Panc1 (cell line): ENCODE measurements at regions of chr19 and their contacts with region 1.

Region 1: DNA sequence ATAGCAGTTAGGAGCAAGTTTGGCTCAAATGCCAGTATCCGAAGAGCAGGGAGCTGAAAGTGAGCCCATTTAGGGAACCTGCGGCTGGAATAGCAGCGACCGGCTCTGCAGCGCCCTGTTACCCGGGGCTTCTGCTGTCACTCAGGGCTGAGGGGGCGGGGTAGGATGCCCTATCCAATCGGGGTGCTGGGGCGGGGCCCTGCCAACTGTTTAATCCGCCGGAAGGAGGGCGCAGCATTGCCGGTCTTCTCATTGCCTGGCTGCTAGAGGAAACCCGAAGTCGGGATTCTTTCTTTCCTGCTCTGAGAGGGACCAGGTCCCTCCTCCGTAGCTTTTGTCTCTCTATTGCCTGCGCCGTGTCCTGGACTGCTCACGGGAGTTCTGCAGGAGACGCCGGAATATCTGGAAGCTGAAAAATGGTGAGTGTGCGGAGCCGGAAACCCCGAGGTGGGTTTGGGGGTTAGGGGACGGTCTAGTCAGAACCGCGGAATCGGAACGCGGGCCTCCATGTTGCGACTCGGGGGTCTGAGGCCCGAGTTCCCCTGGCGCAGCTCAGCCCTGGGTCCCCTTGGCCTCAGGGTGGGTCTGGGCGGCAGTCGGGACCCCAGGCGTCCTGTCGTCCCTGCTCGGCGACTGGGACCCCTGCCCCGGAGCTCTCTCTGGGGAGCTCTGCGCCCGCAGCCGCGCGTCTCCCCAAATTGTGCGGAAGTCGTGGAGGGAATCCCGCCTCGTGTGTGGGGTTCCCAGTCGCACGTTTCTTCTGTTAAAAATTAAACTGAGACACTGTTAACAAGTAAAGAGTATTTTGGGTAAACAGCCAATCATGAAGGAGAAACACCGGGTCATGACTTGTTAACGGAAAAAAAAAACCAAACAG is 22.8 kb downstream of the ZNF763 start:
- DNase-seq: no peak
- ATAC-seq: peak; percentile 99
- H3K4me3 ChIP-seq: peak overlapping the region; percentile 89 to 90
- H3K27ac ChIP-seq: peak overlapping the region; percentile 87
- H3K4me1 ChIP-seq: no peaks in the 10 kb centered on the region
- H3K27me3 ChIP-seq: no peaks in the 10 kb centered on the region
- CTCF ChIP-seq: no peak

Region 2: DNA sequence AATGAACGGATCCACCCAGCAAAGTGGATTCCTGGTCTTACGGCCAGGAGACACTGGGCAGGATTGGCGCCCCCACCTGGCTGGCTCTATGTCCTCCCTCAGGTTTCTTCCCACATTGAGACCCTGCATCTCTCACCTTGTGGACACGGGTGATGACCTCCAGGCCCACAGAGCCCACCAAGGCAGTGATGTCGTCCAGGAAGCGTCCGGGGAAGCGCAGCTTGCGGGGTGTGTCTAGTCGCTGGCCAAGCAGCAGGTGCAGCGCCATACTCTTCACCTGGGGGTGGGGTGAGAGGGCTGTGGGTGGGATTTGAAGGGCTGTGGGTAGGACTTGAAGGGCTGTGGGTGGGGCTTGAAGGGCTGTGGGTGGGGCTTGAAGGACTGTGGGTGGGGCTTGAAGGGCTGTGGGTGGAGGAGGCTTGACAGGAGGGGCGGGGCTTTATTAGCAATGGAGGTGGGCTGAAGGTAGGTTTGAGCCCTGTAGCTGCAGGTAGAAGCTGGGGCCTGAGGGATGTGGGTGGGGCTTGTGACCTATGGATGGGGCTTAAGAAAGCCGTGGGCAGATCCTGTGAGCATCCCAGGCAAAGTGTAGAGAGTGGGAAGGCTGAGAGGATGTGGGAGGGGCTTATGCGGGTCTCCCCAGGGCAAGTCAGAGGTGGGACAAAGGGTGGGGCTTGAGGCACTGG is 760.3 kb before region 1 on chr19:
- CTCF ChIA-PET with region 1: no interaction called
- POLR2A ChIA-PET with region 1: no interaction called
- in situ Hi-C with region 1: no loop called
- intact Hi-C with region 1: no loop called
- DNase-seq: no peak
- ATAC-seq: peak; percentile 61
- H3K4me3 ChIP-seq: no peak overlapping the region
- H3K27ac ChIP-seq: no peak overlapping the region
- H3K4me1 ChIP-seq: no peaks in the 10 kb centered on the region
- H3K27me3 ChIP-seq: no peaks in the 10 kb centered on the region
- CTCF ChIP-seq: no peak

Region 3: DNA sequence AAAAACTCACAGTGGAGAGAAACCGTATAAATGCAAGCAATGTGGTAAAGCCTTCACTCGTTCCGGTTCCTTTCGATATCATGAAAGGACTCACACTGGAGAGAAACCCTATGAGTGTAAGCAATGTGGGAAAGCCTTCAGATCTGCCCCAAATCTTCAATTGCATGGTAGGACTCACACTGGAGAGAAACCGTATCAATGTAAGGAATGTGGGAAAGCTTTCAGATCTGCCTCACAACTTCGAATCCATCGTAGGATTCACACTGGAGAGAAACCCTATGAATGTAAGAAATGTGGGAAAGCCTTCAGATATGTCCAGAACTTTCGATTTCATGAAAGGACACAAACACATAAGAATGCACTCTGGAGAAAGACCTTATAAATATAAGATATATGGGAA is 119.5 kb before region 1 on chr19:
- CTCF ChIA-PET with region 1: no interaction called
- POLR2A ChIA-PET with region 1: no interaction called
- in situ Hi-C with region 1: no loop called
- intact Hi-C with region 1: no loop called
- DNase-seq: no peak
- ATAC-seq: no peak
- H3K4me3 ChIP-seq: no peak overlapping the region
- H3K27ac ChIP-seq: no peak overlapping the region
- H3K4me1 ChIP-seq: no peaks in the 10 kb centered on the region
- H3K27me3 ChIP-seq: no peaks in the 10 kb centered on the region
- CTCF ChIP-seq: no peak

Region 4: GRCh38 chr19:11964858-11965645 is 22.6 kb before region 1 on chr19 and contains the start of gene ZNF763:
- CTCF ChIA-PET with region 1: interaction called, 3 read pairs
- POLR2A ChIA-PET with region 1: interaction called, 10 read pairs
- in situ Hi-C with region 1: no loop called
- intact Hi-C with region 1: no loop called
- DNase-seq: no peak
- ATAC-seq: peak; percentile 98
- H3K4me3 ChIP-seq: peak within 1 kb of the TSS; percentile 62 to 84
- H3K27ac ChIP-seq: peak within 1 kb of the TSS; percentile 52
- H3K4me1 ChIP-seq: peaks cover 5% of the 10 kb centered on the region
- H3K27me3 ChIP-seq: no peaks in the 10 kb centered on the region
- CTCF ChIP-seq: no peak
- total RNA-seq, gene ZNF763: 0.39 TPM

Region 5: DNA sequence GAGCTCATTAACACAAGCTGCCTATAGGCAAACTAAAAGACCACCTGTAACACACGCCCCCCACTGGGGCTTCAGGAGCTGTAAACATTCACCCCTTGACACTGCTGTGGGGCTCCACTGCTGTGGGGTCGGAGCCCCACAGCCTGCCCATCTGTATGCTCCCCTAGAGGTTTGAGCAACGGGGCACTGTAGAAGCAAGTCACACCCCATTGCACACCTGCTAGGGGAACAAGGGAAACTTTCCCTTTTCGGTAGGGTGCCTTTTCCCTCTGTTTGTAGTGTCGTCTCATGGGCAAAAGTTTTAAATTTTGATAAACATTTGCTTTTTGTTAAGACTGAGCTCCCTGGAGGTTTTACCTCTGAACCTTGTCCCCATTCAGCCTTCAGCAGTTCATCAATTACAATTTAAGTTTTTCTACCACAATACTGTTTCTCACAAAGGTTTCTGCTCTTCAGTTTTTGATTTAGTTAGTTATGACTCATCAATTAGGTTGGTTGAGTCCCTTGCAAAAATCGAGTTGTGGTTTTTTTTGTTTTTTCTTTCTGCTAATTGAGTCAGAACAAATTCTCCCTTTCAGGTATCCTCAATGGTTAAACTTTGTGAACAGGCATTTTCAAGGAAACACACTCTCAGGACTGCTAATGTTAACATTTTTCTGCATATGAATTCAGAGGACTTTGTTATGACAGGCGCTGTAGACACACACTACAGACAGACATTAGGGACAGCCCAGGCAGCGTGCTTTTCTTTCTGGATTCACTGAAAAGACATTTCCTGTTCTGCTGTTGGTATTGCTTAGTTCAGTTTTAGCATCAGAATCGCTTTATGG is 12.7 kb after region 1 on chr19:
- CTCF ChIA-PET with region 1: no interaction called
- POLR2A ChIA-PET with region 1: no interaction called
- in situ Hi-C with region 1: no loop called
- intact Hi-C with region 1: no loop called
- DNase-seq: no peak
- ATAC-seq: no peak
- H3K4me3 ChIP-seq: no peak overlapping the region
- H3K27ac ChIP-seq: no peak overlapping the region
- H3K4me1 ChIP-seq: no peaks in the 10 kb centered on the region
- H3K27me3 ChIP-seq: no peaks in the 10 kb centered on the region
- CTCF ChIP-seq: no peak